Keratinocyte (primary cell): ENCODE measurements at regions of chr9 and their contacts with region 1.

Region 1: GRCh38 chr9:92029553-92029952 is 79.5 kb upstream of the ROR2 start:
- DNase-seq: no peak
- H3K4me3 ChIP-seq: no peak overlapping the region
- H3K27ac ChIP-seq: no peak overlapping the region
- H3K4me1 ChIP-seq: no peaks in the 10 kb centered on the region
- H3K27me3 ChIP-seq: no peaks in the 10 kb centered on the region
- CTCF ChIP-seq: peak in 2 of 3 experiments; percentile 21 to 40

Region 2: DNA sequence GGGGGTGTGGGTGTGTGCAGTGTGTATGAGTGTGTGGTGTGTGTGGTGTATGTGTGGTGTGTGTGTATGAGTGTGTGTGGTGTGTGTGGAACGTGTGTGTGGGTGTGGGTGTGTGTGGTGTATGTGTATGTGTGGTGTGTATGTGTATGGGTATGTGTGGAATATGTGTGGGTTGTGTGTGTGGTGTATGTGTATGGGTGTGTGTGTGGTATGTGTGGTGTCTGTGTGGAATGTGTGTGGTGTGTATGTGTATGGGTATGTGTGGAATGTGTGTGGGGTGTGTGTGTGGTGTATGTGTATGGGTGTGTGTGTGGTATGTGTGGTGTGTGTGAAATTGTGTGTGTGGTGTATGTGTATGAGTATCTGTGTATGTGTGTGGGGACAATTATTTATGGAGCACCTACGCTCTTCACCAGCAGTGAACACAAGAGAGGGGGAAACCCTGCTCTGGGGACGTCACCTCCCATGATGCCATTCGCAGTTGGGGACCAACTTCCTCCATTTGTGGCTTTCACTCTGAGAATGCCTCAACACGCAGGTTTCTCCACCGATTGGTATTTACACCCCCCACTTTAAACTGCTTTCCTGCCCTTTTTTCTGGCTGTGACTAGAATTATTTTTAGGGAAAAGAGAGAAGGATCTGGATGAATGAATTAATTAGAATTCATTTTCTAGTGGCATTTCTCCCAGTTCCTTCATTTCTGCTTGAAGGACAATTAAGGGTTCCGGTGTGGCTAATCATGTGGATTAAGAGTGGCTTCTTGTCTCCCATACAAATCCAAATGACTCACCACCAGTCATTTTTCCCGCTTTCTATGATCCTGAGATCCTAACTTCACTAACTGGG is 317.6 kb before region 1 on chr9:
- dilution Hi-C with region 1: no loop called
- DNase-seq: peak; percentile 17
- H3K4me3 ChIP-seq: no peak overlapping the region
- H3K27ac ChIP-seq: no peak overlapping the region
- H3K4me1 ChIP-seq: no peaks in the 10 kb centered on the region
- H3K27me3 ChIP-seq: peaks cover 10% of the 10 kb centered on the region
- CTCF ChIP-seq: no peak

Region 3: GRCh38 chr9:91775011-91775707 is 254.4 kb before region 1 on chr9:
- dilution Hi-C with region 1: loop called (anchors 10 kb)
- DNase-seq: no peak
- H3K4me3 ChIP-seq: no peak overlapping the region
- H3K27ac ChIP-seq: no peak overlapping the region
- H3K4me1 ChIP-seq: peaks cover 26% of the 10 kb centered on the region
- H3K27me3 ChIP-seq: peaks cover 5% of the 10 kb centered on the region
- CTCF ChIP-seq: peak; percentile 80 to 92 (median 88)

Region 4: GRCh38 chr9:91930475-91930874 is 99.1 kb before region 1 on chr9:
- dilution Hi-C with region 1: no loop called
- DNase-seq: no peak
- H3K4me3 ChIP-seq: no peak overlapping the region
- H3K27ac ChIP-seq: no peak overlapping the region
- H3K4me1 ChIP-seq: no peaks in the 10 kb centered on the region
- H3K27me3 ChIP-seq: no peaks in the 10 kb centered on the region
- CTCF ChIP-seq: no peak

Region 5: GRCh38 chr9:91978739-91979414 is 50.7 kb before region 1 on chr9:
- dilution Hi-C with region 1: no loop called
- DNase-seq: no peak
- H3K4me3 ChIP-seq: no peak overlapping the region
- H3K27ac ChIP-seq: no peak overlapping the region
- H3K4me1 ChIP-seq: peaks cover 6% of the 10 kb centered on the region
- H3K27me3 ChIP-seq: no peaks in the 10 kb centered on the region
- CTCF ChIP-seq: peak; percentile 10 to 20 (median 19)